Aorta (tissue), 5 donors: ENCODE measurements at regions of chr2 and their contacts with region 1.

Region 1: DNA sequence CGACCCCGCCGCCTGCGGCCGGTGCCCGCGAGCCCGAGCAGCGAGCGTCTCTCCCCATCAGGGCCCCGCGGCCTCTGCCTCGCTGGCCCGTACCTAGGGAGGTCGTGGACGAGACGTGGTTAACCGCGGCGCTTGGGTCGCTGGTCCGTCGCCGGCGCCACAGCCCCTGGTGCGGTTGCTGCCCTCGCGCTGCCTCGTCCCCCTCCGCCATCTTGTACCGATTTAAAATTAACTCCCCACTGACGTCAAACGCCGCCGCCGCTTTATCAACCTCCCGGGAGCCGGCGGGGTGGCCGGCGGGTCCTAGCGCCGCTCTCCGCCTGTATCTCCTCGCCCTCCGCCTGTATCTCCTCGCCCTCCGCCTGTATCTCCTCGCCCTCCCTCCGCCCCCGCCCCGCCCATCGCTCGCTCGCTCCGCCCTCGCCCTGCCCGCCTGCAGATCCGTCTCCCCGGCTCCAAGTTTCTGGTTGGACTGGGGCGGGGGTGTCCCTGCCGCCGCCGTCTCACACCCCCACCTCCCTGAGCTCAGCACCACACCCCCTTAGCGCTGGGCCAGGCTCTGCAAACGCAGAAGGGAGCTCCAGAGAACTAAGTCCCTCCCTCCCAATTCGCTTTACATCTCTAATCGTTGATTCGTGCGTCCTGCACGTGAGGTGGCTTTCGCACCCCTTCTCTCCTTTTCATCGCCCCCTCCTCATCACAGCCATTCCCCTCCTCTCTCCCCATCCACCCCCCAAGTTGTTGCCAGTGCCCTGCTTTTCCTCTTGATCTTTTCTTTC is at the start of gene ATL2:
- DNase-seq: peak; percentile 98
- ATAC-seq: peak; percentile 96
- H3K4me3 ChIP-seq: peak within 1 kb of the TSS; percentile 74 to 85
- H3K27ac ChIP-seq: peak within 1 kb of the TSS; percentile 88 to 89
- H3K4me1 ChIP-seq: no peaks in the 10 kb centered on the region
- H3K27me3 ChIP-seq: no peaks in the 10 kb centered on the region
- total RNA-seq, gene ATL2: 50.0 to 52.8 TPM

Region 2: GRCh38 chr2:37558623-37559022 is 818.6 kb before region 1 on chr2:
- intact Hi-C with region 1: no loop called
- DNase-seq: peak; percentile 55 to 63
- ATAC-seq: no peak
- H3K4me3 ChIP-seq: no peak overlapping the region
- H3K27ac ChIP-seq: no peak overlapping the region
- H3K4me1 ChIP-seq: no peaks in the 10 kb centered on the region
- H3K27me3 ChIP-seq: no peaks in the 10 kb centered on the region

Region 3: DNA sequence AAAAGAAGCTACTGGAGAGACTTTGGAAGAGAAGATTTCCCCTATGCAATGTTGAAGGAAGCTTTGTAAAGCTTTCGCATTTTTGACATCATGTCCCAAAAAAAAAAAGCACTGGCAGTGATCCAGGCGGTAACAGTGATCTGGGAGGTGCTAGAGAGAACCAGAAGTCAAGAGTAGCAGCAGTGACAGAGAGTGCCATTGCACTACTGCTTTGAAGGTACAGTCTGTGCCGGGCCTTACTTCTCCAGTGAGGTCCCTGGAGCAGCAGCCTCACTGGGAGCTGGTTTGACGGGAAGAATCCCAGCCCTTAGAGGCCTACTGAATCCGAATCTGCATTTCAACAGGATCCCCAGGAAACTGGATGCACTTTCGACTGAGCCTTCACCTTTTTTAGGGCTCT is 50.7 kb after region 1 on chr2:
- intact Hi-C with region 1: loop called in 1 of 2 experiments (anchors 5 kb)
- DNase-seq: no peak
- ATAC-seq: no peak
- H3K4me3 ChIP-seq: no peak overlapping the region
- H3K27ac ChIP-seq: no peak overlapping the region
- H3K4me1 ChIP-seq: peaks cover 0 to under 1% of the 10 kb centered on the region in 2 donors
- H3K27me3 ChIP-seq: no peaks in the 10 kb centered on the region

Region 4: GRCh38 chr2:38528008-38528442 is 150.8 kb after region 1 on chr2:
- intact Hi-C with region 1: loop called (anchors 5 to 10 kb)
- DNase-seq: peak; percentile 61 to 88
- ATAC-seq: peak; percentile 58
- H3K4me3 ChIP-seq: peak overlapping the region; percentile 48 to 69
- H3K27ac ChIP-seq: peak overlapping the region in 1 of 2 donors; percentile 49
- H3K4me1 ChIP-seq: peaks cover 0 to 2% of the 10 kb centered on the region in 2 donors
- H3K27me3 ChIP-seq: no peaks in the 10 kb centered on the region